ENCODE measurements at regions of chr20 and their contacts with region 1.

Region 1: DNA sequence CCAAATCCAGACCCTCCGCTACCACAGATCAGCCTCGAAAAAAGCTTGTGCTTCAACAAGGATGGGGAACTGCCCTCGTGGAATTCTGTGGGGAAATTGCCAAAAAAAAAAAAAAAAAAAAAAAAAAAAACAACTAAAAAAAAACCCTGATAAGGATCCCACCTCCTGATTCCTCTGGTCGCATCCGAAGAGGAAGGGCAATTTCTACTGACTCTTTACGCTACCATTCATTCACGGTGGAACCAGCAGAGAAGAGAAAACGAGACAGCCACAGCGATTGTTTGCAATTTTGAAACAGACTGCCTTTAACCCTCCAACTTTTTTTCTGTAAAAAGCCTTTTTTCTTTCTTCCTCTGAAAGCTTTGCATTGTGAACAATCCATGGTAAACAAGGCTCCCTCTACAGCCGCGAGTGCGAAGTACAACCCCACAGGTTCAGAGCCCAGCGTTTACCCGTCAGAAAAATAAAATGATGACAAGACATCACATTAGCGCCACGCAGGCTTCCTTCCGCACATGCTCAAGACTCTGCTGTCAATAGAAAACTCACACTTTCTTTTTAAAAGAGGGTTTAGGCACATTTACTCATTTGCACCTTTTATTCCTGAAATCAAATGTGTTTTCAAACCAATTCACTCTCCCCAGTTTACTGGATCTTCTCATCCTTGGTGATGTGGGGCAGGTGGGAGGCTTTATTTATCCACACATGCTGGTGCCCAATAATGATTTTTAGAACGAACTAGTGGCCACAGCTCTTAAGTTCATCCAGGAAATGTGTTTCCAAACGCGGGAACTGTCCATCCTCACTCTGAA is 100.0 kb downstream of the NOL4L start:
- DNase-seq: peak; percentile 82
- H3K4me3 Mint-ChIP-seq: peak overlapping the region; percentile 89
- H3K27ac Mint-ChIP-seq: peak overlapping the region; percentile 71
- H3K4me1 Mint-ChIP-seq: peaks cover 27% of the 10 kb centered on the region
- H3K27me3 Mint-ChIP-seq: peaks cover 41% of the 10 kb centered on the region
- CTCF ChIP-seq: peak; percentile 90

Region 2: GRCh38 chr20:32336918-32337347 is 148.2 kb before region 1 on chr20:
- CTCF ChIA-PET with region 1: no interaction called
- intact Hi-C with region 1: loop called (anchors 10 kb)
- DNase-seq: no peak
- H3K4me3 Mint-ChIP-seq: no peak overlapping the region
- H3K27ac Mint-ChIP-seq: no peak overlapping the region
- H3K4me1 Mint-ChIP-seq: peaks cover 39% of the 10 kb centered on the region
- H3K27me3 Mint-ChIP-seq: no peaks in the 10 kb centered on the region
- CTCF ChIP-seq: peak; percentile 63

Region 3: DNA sequence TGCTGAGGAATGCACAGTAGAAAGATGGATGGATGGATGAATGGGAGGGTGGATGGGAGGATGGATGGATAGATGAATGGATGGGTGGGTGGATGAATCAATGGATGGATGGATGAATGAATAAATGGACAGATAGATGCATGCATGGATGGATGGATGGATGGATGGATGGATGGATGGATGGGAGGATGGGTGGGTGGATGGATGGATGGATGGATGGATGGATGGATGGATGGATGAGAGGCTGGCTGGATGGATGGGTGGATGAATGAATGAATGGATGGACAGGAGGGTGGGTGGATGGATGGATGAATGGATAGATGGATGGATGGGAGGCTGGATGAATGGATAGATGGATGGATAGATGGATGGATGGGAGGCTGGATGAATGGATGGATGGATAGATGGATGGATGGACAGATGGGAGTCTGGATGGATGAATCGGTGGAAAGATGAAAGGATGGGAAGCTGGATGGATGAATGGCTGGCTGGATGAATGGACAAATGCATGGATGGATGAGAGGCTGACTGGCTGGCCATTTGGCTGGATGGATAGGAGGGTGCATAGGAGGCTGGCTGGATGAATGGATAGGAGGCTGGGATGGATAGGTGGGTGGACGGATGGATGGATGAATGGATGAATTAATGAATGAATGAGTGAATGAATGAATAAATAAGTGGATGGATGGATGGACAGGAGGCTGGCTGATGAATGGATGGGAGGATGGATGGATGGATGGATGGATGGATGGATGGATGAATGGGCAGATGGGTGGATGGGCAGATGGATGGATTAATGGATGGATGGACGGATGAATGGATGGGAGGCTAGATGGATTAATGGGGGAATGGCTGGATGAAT is 128.3 kb after region 1 on chr20:
- CTCF ChIA-PET with region 1: interaction called, 10 read pairs
- intact Hi-C with region 1: no loop called
- DNase-seq: no peak
- H3K4me3 Mint-ChIP-seq: no peak overlapping the region
- H3K27ac Mint-ChIP-seq: no peak overlapping the region
- H3K4me1 Mint-ChIP-seq: no peaks in the 10 kb centered on the region
- H3K27me3 Mint-ChIP-seq: peaks cover 58% of the 10 kb centered on the region
- CTCF ChIP-seq: no peak